MCF 10A (cell line): ENCODE measurements at regions of chr5 and their contacts with region 1.

Region 1: GRCh38 chr5:142720641-142721271 is 34.9 kb upstream of the FGF1 start:
- DNase-seq: peak; percentile 95
- H3K4me3 Mint-ChIP-seq: peak overlapping the region; percentile 27
- H3K27ac Mint-ChIP-seq: peak overlapping the region; percentile 74
- H3K4me1 Mint-ChIP-seq: peaks cover 46% of the 10 kb centered on the region
- H3K27me3 Mint-ChIP-seq: no peaks in the 10 kb centered on the region
- CTCF ChIP-seq: peak; percentile 24

Region 2: GRCh38 chr5:142529626-142530278 is 191.0 kb before region 1 on chr5:
- CTCF ChIA-PET with region 1: no interaction called
- POLR2A ChIA-PET with region 1: no interaction called
- intact Hi-C with region 1: no loop called
- DNase-seq: peak; percentile 86
- H3K4me3 Mint-ChIP-seq: no peak overlapping the region
- H3K27ac Mint-ChIP-seq: peak overlapping the region; percentile 72
- H3K4me1 Mint-ChIP-seq: peaks cover 21% of the 10 kb centered on the region
- H3K27me3 Mint-ChIP-seq: no peaks in the 10 kb centered on the region
- CTCF ChIP-seq: no peak

Region 3: DNA sequence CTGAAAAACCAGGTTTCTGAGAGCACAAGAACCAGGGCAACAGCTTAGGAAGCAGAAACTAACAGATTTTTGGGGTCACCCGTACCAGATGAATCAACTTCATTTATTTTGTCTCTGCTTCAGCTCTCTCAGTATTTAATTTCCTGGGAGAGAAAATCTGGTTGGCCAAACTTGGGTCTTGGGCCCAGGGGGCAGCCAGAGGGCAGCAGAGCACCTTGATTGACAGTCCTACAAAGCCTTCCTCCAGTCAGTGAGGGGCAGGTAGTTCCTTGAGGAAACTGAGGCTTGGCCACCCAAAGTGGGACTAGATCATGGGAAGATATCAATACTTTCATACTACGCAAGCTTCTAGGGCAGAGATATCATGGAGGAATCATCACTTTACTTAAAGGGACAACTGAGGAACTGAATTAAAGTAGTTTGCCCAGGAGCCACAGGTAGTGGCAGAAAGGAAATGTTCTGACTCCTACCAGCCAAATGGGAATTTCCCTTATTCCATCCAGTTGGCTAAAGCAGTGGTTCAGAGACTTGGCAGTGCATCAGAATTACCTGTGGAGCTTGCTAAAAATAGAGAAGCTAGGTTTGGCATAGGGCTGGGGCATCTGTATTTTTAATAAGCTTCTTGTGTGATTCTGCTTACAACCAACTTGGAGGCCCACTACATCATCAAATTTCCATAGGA is 28.0 kb after region 1 on chr5:
- CTCF ChIA-PET with region 1: interaction called, 253 read pairs
- POLR2A ChIA-PET with region 1: interaction called, 41 read pairs
- intact Hi-C with region 1: loop called (anchors 1 kb)
- DNase-seq: peak; percentile 84
- H3K4me3 Mint-ChIP-seq: no peak overlapping the region
- H3K27ac Mint-ChIP-seq: peak overlapping the region; percentile 20
- H3K4me1 Mint-ChIP-seq: peaks cover 44% of the 10 kb centered on the region
- H3K27me3 Mint-ChIP-seq: no peaks in the 10 kb centered on the region
- CTCF ChIP-seq: peak; percentile 87

Region 4: DNA sequence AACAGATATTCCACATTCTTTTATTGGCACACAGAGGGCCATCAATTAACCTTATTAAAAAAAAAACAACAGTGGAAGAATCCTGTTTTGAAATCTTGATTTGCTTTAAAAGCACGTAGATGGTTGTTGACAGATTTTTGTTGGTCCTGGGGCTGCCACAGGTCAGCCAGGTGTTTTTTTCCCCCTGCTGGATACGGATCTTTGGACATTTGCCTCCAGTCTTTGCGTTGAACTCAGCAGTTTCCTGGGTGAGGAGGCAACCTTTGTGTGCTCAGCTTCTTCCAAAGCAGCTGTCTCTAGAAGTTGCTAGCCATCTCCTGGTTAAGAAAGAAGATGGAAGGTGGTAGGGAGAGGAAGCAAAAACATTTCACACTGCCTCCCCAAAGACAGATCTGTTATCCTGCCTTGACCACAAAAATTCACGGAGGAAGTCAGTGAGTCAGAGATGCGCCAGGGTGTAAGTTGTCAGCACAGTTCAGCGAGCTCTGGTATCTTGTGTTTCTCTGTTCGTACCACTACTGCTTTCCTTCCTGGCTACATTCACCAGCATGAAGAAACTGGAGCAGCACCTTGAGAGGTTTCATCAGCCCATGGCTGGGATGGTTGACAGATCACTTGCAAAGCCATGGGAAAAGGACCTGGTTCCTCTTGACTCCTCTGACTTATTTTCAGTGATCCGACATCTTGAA is 256.8 kb after region 1 on chr5:
- CTCF ChIA-PET with region 1: no interaction called
- POLR2A ChIA-PET with region 1: no interaction called
- intact Hi-C with region 1: no loop called
- DNase-seq: peak; percentile 93
- H3K4me3 Mint-ChIP-seq: peak overlapping the region; percentile 29
- H3K27ac Mint-ChIP-seq: peak overlapping the region; percentile 87
- H3K4me1 Mint-ChIP-seq: peaks cover 43% of the 10 kb centered on the region
- H3K27me3 Mint-ChIP-seq: no peaks in the 10 kb centered on the region
- CTCF ChIP-seq: no peak

Region 5: DNA sequence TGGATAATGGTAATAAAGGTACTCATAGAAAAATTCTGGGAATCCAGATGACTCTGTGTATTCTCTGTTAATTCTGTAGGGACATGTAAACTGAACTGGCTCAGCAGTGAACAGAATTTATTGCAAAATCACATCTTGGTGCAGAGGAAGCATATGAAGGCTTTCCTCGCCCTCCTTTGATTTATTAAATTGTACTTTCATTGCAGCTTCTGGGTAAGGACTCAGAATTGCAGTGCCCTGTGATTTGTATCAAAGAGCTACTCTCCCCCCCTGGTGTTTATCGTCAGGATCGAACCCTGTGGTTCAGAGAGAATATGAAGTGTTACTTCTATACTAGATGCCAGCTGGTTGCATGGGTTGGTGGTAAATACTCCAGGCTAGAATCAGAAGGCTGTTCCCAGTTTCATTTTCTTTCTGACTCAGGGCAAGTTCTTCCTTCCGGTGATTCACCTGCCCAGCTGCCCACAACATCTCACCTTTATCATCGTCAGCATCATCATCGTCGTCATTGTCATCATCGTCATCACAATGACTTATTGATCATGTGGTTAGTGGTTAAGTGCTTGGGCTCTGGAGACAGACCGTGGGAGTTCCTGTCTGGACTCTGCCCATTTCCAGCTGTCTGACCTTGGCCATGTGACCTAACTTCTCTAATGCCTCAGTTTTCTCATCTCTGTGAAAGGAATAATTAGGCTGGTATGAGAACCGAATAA is 288.2 kb after region 1 on chr5:
- CTCF ChIA-PET with region 1: no interaction called
- POLR2A ChIA-PET with region 1: no interaction called
- intact Hi-C with region 1: no loop called
- DNase-seq: peak; percentile 95
- H3K4me3 Mint-ChIP-seq: peak overlapping the region; percentile 43
- H3K27ac Mint-ChIP-seq: peak overlapping the region; percentile 75
- H3K4me1 Mint-ChIP-seq: peaks cover 24% of the 10 kb centered on the region
- H3K27me3 Mint-ChIP-seq: no peaks in the 10 kb centered on the region
- CTCF ChIP-seq: peak; percentile 14